Activated CD4-positive, alpha-beta memory T cell treated with anti-CD3 and anti-CD28 coated beads for 36 hours (primary cell): ENCODE measurements at regions of chr3 and their contacts with region 1.

Region 1: DNA sequence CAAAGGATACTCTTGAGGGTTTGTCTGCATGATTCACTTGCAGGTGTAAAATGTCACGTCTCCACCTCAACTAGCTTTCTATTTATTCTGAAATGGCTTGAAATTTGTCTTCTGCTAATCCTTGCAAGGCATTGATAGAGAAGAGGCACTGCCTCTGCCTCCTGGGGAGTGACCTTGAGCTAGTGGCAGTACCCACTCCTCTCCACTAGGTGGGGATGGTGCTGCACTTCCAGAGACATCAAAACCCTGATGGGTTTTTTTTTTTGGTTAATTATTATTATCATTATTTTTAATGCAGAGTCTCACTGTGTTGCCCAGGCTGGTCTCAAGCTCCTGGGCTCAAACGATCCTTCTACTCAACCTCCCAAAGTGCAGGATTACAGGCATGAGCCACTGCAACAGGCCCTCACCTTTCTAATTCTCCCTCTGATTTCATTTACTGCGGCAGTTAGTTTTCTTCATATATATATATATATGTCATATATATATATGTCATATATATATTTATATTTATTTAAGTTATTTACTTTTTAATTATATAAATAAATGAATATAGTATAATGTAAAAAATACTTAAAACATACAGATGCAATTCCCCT is 117.6 kb upstream of the EIF1B start:
- DNase-seq: peak; percentile 66
- H3K4me3 Mint-ChIP-seq: no peak overlapping the region
- H3K27ac Mint-ChIP-seq: no peak overlapping the region
- H3K4me1 Mint-ChIP-seq: no peaks in the 10 kb centered on the region
- H3K27me3 Mint-ChIP-seq: no peaks in the 10 kb centered on the region

Region 2: DNA sequence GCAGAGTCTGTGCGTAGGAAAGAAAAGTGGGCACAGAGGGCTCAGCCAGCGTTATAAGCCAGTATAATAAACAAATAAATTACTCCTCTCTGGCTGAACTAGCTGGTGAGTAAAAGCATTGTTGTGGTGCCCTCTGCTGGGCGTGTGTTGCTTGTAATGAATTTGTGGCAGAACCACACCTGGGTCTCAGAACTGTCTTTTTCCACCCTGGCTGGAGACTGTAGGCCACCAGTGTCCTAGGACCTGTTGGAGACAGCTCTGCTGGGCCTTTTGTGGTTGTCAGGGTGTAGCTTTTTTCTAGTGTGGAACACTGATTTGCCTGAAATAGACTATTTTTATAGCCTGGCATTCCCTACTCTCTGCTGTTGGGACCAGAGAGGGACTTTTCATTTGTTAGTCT is 12.9 kb before region 1 on chr3:
- CTCF ChIA-PET with region 1: interaction called, 43 read pairs
- POLR2A ChIA-PET with region 1: no interaction called
- intact Hi-C with region 1: no loop called
- DNase-seq: peak; percentile 72
- H3K4me3 Mint-ChIP-seq: no peak overlapping the region
- H3K27ac Mint-ChIP-seq: no peak overlapping the region
- H3K4me1 Mint-ChIP-seq: no peaks in the 10 kb centered on the region
- H3K27me3 Mint-ChIP-seq: no peaks in the 10 kb centered on the region

Region 3: DNA sequence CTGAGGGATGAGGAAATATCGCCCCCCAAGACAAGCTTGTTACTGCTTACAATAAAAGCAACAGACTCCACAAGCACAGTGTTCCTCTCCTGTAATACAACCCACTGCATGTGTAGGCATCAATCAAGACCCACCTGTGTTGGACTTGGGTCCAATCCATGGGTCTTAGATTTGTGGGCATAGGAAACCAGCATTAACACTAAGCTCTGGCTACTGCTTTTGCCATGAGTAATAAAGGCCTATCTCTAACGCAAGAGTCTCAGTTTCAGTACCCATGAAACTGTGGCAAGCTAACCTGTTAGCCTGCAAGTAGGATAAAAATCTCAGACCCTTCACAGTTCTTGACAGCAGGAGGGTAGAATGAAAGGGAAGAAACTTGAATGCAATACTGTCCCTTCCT is 112.4 kb after region 1 on chr3:
- CTCF ChIA-PET with region 1: interaction called, 26 read pairs
- POLR2A ChIA-PET with region 1: no interaction called
- intact Hi-C with region 1: loop called (anchors 2 kb)
- DNase-seq: no peak
- H3K4me3 Mint-ChIP-seq: no peak overlapping the region
- H3K27ac Mint-ChIP-seq: no peak overlapping the region
- H3K4me1 Mint-ChIP-seq: peaks cover 6% of the 10 kb centered on the region
- H3K27me3 Mint-ChIP-seq: no peaks in the 10 kb centered on the region

Region 4: DNA sequence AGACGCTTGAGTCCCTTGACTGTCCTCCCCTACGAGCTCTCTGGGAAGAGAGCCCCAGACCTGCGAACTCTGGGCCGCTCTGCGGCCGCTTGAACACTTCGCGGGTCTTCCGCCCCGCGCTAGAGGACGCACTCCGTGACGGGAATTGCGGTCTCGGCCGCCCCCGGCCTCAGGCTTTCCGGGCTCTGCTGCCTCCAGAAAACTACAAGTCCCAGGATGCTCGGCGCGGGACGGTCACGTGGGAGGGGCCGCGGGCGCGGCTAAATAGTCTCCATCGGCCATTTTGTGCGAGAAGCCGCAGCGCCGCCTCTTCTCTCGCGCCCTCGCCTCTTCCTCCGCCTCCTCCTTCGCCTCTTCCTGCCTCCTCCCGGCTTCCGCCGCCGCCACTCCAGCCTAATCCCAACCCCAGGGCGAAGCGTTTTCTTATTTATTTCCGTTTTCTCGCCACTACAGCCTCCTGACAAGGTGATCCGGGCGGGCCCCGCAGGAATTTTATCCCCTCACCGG is 117.5 kb after region 1 on chr3 and contains the start of gene EIF1B:
- CTCF ChIA-PET with region 1: interaction called, 183 read pairs
- POLR2A ChIA-PET with region 1: no interaction called
- intact Hi-C with region 1: loop called (anchors 2 kb)
- DNase-seq: peak; percentile 99
- H3K4me3 Mint-ChIP-seq: peak within 1 kb of the TSS; percentile 96
- H3K27ac Mint-ChIP-seq: peak within 1 kb of the TSS; percentile 97
- H3K4me1 Mint-ChIP-seq: peaks cover 23% of the 10 kb centered on the region
- H3K27me3 Mint-ChIP-seq: no peaks in the 10 kb centered on the region
- total RNA-seq, gene EIF1B: 48.6 to 51.0 TPM

Region 5: GRCh38 chr3:40317061-40317855 is 125.3 kb after region 1 on chr3:
- CTCF ChIA-PET with region 1: interaction called, 183 read pairs
- POLR2A ChIA-PET with region 1: no interaction called
- intact Hi-C with region 1: loop called (anchors 1 kb)
- DNase-seq: peak; percentile 31
- H3K4me3 Mint-ChIP-seq: no peak overlapping the region
- H3K27ac Mint-ChIP-seq: no peak overlapping the region
- H3K4me1 Mint-ChIP-seq: peaks cover 4% of the 10 kb centered on the region
- H3K27me3 Mint-ChIP-seq: no peaks in the 10 kb centered on the region